Activated CD4-positive, alpha-beta memory T cell treated with anti-CD3 and anti-CD28 coated beads for 36 hours (primary cell): ENCODE measurements at regions of chr3 and their contacts with region 1.

Region 1: DNA sequence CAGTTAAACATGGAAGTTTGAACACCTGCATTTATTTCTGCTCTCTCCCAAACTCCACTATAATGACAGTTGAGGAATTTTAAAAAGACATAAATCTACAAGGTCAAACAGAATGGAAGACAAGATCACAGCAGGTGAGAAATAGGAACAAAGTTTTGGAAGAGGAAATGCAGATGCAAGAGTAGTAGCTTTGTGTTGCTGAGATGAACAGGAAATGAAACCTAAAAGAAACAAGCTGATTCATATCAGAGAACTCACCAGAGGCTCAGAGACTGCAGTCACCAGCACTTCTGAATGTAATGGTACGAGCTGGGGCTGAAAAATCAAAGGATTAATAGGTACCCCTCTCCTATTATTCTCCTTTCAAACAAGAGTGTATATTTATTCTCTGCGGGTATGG is 459.9 kb downstream of the RAP2B start:
- DNase-seq: peak; percentile 24
- H3K4me3 Mint-ChIP-seq: no peak overlapping the region
- H3K27ac Mint-ChIP-seq: peak overlapping the region; percentile 72
- H3K4me1 Mint-ChIP-seq: peaks cover 62% of the 10 kb centered on the region
- H3K27me3 Mint-ChIP-seq: no peaks in the 10 kb centered on the region

Region 2: DNA sequence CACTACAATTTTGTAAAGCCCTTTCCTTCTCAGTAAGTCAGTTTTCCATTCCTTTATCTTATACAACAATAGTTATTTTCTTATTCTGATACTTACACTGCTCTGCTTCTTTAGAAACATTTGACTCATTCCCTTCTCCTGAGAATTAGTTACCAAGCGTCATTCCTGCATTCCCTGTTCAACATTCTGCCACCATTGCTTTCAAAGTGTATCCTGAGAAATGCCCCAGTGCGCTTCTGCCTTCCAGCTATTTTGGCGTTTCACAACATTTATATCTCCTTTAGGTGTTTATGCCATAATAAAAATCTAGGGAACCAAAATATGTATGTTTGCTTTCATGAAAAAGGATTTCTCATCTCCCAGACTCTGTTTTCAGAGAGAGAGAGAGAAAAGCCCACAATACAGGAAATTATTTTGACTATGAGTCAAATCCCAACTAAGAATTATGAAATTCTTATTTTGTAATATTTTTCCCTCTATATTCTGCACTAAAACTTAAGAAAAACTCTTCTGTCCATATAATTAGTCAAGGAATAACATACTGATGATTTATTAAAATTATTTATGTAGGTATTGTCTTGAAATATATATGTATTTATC is 578.1 kb before region 1 on chr3:
- CTCF ChIA-PET with region 1: interaction called, 4 read pairs
- POLR2A ChIA-PET with region 1: no interaction called
- intact Hi-C with region 1: loop called (anchors 2 kb)
- DNase-seq: no peak
- H3K4me3 Mint-ChIP-seq: no peak overlapping the region
- H3K27ac Mint-ChIP-seq: no peak overlapping the region
- H3K4me1 Mint-ChIP-seq: peaks cover 7% of the 10 kb centered on the region
- H3K27me3 Mint-ChIP-seq: no peaks in the 10 kb centered on the region

Region 3: GRCh38 chr3:153221748-153222162 is 400.2 kb before region 1 on chr3:
- CTCF ChIA-PET with region 1: no interaction called
- POLR2A ChIA-PET with region 1: interaction called, 3 read pairs
- intact Hi-C with region 1: loop called (anchors 2 kb)
- DNase-seq: peak; percentile 81
- H3K4me3 Mint-ChIP-seq: peak overlapping the region; percentile 72
- H3K27ac Mint-ChIP-seq: peak overlapping the region; percentile 90
- H3K4me1 Mint-ChIP-seq: peaks cover 54% of the 10 kb centered on the region
- H3K27me3 Mint-ChIP-seq: no peaks in the 10 kb centered on the region

Region 4: DNA sequence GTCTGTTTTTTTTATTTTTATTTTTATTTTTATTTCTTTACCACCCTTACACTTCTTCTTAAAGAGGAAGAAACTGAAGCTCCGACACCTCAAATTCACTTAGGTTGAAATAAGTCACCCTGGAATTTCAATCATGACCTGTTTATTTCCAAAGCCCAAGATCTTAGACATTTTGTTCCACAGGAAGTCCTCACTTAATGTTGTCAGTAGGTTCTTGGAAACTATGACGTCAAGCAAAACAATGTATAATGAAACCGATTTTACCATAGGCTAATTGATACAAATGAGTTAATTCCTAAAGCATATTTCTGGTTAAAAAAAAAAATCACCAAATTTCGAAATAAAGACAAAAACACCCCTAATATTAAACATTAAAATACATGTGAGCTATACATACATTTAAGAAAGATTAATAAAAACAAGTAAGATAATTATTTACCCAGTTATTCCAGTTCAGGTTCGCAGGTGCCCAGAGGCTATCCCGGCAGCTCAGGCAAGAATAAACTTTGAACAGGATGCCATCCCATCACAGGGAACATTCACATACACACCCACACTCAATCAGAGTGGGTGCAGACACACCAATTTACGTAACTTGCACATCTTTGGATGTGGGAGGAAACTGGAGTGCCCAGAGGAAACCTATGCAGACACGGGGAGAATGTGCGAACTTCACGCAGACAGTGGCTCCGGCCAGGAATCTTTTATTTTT is 68.9 kb before region 1 on chr3:
- CTCF ChIA-PET with region 1: no interaction called
- POLR2A ChIA-PET with region 1: no interaction called
- intact Hi-C with region 1: loop called (anchors 2 kb)
- DNase-seq: no peak
- H3K4me3 Mint-ChIP-seq: no peak overlapping the region
- H3K27ac Mint-ChIP-seq: no peak overlapping the region
- H3K4me1 Mint-ChIP-seq: peaks cover 16% of the 10 kb centered on the region
- H3K27me3 Mint-ChIP-seq: no peaks in the 10 kb centered on the region

Region 5: DNA sequence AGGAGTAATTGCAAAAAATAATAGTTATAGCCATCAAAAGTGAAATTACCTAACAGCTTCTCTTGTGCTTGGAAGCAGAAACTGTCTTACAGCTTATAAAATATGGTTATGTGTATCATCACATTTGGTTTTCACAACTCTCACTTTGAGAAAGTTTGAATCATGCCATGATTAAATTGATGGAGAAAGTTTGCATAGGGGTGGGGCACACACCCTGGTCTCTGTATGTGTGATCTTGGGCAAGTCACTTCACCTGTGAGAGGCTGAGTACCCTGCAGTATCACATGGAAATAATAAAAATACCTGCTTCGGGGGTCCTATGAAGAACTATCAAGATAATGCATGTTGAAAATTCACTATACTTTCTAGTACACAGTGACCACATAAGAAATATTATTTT is 11.5 kb after region 1 on chr3:
- CTCF ChIA-PET with region 1: no interaction called
- POLR2A ChIA-PET with region 1: no interaction called
- intact Hi-C with region 1: loop called (anchors 1 kb)
- DNase-seq: no peak
- H3K4me3 Mint-ChIP-seq: no peak overlapping the region
- H3K27ac Mint-ChIP-seq: no peak overlapping the region
- H3K4me1 Mint-ChIP-seq: peaks cover 44% of the 10 kb centered on the region
- H3K27me3 Mint-ChIP-seq: no peaks in the 10 kb centered on the region

Region 6: GRCh38 chr3:153673853-153674252 is 51.9 kb after region 1 on chr3:
- CTCF ChIA-PET with region 1: no interaction called
- POLR2A ChIA-PET with region 1: interaction called, 3 read pairs
- intact Hi-C with region 1: loop called (anchors 1 kb)
- DNase-seq: no peak
- H3K4me3 Mint-ChIP-seq: no peak overlapping the region
- H3K27ac Mint-ChIP-seq: no peak overlapping the region
- H3K4me1 Mint-ChIP-seq: peaks cover 9% of the 10 kb centered on the region
- H3K27me3 Mint-ChIP-seq: no peaks in the 10 kb centered on the region

Region 7: DNA sequence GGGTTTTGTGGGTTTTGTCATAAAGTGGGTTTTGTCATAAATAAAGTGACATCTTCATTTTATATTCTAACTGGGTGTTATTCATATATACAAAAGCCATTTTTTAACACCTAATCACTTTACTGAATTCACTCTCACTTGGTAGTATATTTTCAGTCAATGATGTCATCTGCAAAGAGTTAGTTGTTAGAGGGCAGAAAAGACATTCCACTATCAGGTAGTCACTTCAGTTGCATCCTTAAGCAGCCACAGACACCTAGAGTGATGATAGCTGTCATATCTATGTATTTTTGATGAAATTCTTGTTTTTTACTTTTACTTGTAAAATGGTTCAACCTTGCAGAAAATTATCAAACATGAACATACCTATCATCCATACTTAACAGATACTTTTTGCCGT is 613.4 kb after region 1 on chr3:
- CTCF ChIA-PET with region 1: no interaction called
- POLR2A ChIA-PET with region 1: no interaction called
- intact Hi-C with region 1: loop called (anchors 2 kb)
- DNase-seq: no peak
- H3K4me3 Mint-ChIP-seq: no peak overlapping the region
- H3K27ac Mint-ChIP-seq: no peak overlapping the region
- H3K4me1 Mint-ChIP-seq: peaks cover 13% of the 10 kb centered on the region
- H3K27me3 Mint-ChIP-seq: peaks cover 24% of the 10 kb centered on the region